ENCODE measurements at regions of chr5 and their contacts with region 1.

Region 1: GRCh38 chr5:139588962-139589361 is 27.8 kb downstream of the UBE2D2 start:
- DNase-seq: no peak
- H3K4me3 Mint-ChIP-seq: no peak overlapping the region
- H3K27ac Mint-ChIP-seq: no peak overlapping the region
- H3K4me1 Mint-ChIP-seq: peaks cover 67% of the 10 kb centered on the region
- H3K27me3 Mint-ChIP-seq: no peaks in the 10 kb centered on the region

Region 2: GRCh38 chr5:139611703-139612584 is 23.0 kb after region 1 on chr5:
- CTCF ChIA-PET with region 1: no interaction called
- intact Hi-C with region 1: loop called (anchors 1 kb)
- DNase-seq: peak; percentile 64
- H3K4me3 Mint-ChIP-seq: no peak overlapping the region
- H3K27ac Mint-ChIP-seq: peak overlapping the region; percentile 81
- H3K4me1 Mint-ChIP-seq: peaks cover 36% of the 10 kb centered on the region
- H3K27me3 Mint-ChIP-seq: no peaks in the 10 kb centered on the region